CD4-positive, alpha-beta T cell (primary cell): ENCODE measurements at regions of chr10 and their contacts with region 1.

Region 1: GRCh38 chr10:124640538-124641231 is 103.5 kb downstream of the FAM53B start:
- DNase-seq: peak in 4 of 14 experiments; percentile 39 to 58 (median 48)
- ATAC-seq: peak; percentile 25
- H3K4me3 ChIP-seq: peak overlapping the region; percentile 15
- H3K4me3 Mint-ChIP-seq: peak overlapping the region; percentile 46
- H3K27ac ChIP-seq: peak overlapping the region; percentile 43 to 49
- H3K27ac Mint-ChIP-seq: peak overlapping the region; percentile 95
- H3K4me1 ChIP-seq: peaks cover 100% of the 10 kb centered on the region
- H3K4me1 Mint-ChIP-seq: peaks cover 86% of the 10 kb centered on the region
- H3K27me3 ChIP-seq: no peaks in the 10 kb centered on the region
- H3K27me3 Mint-ChIP-seq: no peaks in the 10 kb centered on the region
- CTCF ChIP-seq: no peak

Region 2: GRCh38 chr10:124323111-124323886 is 317.4 kb before region 1 on chr10:
- CTCF ChIA-PET with region 1: no interaction called
- POLR2A ChIA-PET with region 1: no interaction called
- intact Hi-C with region 1: no loop called
- DNase-seq: peak in 2 of 14 experiments; percentile 28 to 30
- ATAC-seq: no peak
- H3K4me3 ChIP-seq: no peak overlapping the region
- H3K4me3 Mint-ChIP-seq: no peak overlapping the region
- H3K27ac ChIP-seq: no peak overlapping the region
- H3K27ac Mint-ChIP-seq: no peak overlapping the region
- H3K4me1 ChIP-seq: no peaks in the 10 kb centered on the region
- H3K4me1 Mint-ChIP-seq: no peaks in the 10 kb centered on the region
- H3K27me3 ChIP-seq: no peaks in the 10 kb centered on the region
- H3K27me3 Mint-ChIP-seq: peaks cover 10% of the 10 kb centered on the region
- CTCF ChIP-seq: no peak

Region 3: DNA sequence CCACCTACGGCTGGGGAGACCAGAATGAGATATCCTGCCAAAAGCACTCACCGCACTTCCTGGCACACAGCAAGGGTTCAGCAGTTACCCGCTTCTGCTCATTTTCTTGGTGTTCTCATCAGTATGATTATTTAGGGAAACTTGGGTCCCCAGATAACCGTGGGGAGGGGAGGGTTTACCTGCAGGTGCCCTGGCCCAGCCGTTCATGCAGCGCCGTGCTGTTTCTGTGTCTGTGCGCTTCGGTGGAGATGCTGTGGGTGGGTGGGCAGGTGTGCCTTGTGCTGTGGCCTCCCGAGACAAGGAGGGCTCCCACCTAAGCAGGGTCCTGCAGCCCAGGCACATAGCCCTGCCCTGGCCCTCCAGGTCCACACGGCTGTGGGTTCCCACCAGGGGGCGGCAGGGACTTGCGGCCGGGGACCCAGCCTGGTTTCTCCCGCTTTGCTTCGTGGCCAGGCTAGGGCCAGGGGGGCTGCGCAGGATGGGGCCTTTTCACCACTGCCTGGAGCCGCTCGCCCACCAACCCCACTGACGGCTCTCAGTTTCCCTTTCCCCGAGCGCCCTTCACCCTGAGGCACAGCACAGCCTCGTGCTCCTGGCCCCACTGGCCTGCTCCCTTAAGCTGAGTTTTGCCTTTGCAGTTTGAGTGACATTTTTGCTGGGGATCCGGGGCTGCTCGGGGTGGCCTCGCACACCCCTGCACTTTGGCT is 100.6 kb before region 1 on chr10:
- CTCF ChIA-PET with region 1: interaction called, 3 read pairs
- POLR2A ChIA-PET with region 1: no interaction called
- intact Hi-C with region 1: loop called (anchors 5 to 10 kb)
- DNase-seq: peak; percentile 55 to 82 (median 69)
- ATAC-seq: peak; percentile 90
- H3K4me3 ChIP-seq: no peak overlapping the region
- H3K4me3 Mint-ChIP-seq: no peak overlapping the region
- H3K27ac ChIP-seq: no peak overlapping the region
- H3K27ac Mint-ChIP-seq: no peak overlapping the region
- H3K4me1 ChIP-seq: peaks cover 13% of the 10 kb centered on the region
- H3K4me1 Mint-ChIP-seq: peaks cover 9% of the 10 kb centered on the region
- H3K27me3 ChIP-seq: no peaks in the 10 kb centered on the region
- H3K27me3 Mint-ChIP-seq: no peaks in the 10 kb centered on the region
- CTCF ChIP-seq: peak; percentile 70

Region 4: GRCh38 chr10:124671486-124672075 is 30.9 kb after region 1 on chr10:
- CTCF ChIA-PET with region 1: interaction called, 8 read pairs
- POLR2A ChIA-PET with region 1: interaction called, 3 read pairs
- intact Hi-C with region 1: loop called in 1 of 2 experiments (anchors 5 kb)
- DNase-seq: peak in 3 of 14 experiments; percentile 47 to 51 (median 50)
- ATAC-seq: peak; percentile 47
- H3K4me3 ChIP-seq: no peak overlapping the region
- H3K4me3 Mint-ChIP-seq: peak overlapping the region; percentile 70
- H3K27ac ChIP-seq: peak overlapping the region in 1 of 2 donors; percentile 33
- H3K27ac Mint-ChIP-seq: peak overlapping the region; percentile 73
- H3K4me1 ChIP-seq: peaks cover 98% of the 10 kb centered on the region
- H3K4me1 Mint-ChIP-seq: peaks cover 92% of the 10 kb centered on the region
- H3K27me3 ChIP-seq: no peaks in the 10 kb centered on the region
- H3K27me3 Mint-ChIP-seq: no peaks in the 10 kb centered on the region
- CTCF ChIP-seq: no peak

Region 5: GRCh38 chr10:124677749-124678556 is 37.3 kb after region 1 on chr10:
- CTCF ChIA-PET with region 1: interaction called, 6 read pairs
- POLR2A ChIA-PET with region 1: interaction called, 11 read pairs
- intact Hi-C with region 1: loop called in 1 of 2 experiments (anchors 5 kb)
- DNase-seq: peak in 1 of 14 experiments; percentile 28
- ATAC-seq: peak; percentile 42
- H3K4me3 ChIP-seq: no peak overlapping the region
- H3K4me3 Mint-ChIP-seq: peak overlapping the region; percentile 63
- H3K27ac ChIP-seq: peak overlapping the region; percentile 29 to 39
- H3K27ac Mint-ChIP-seq: peak overlapping the region; percentile 87
- H3K4me1 ChIP-seq: peaks cover 94% of the 10 kb centered on the region
- H3K4me1 Mint-ChIP-seq: peaks cover 90% of the 10 kb centered on the region
- H3K27me3 ChIP-seq: no peaks in the 10 kb centered on the region
- H3K27me3 Mint-ChIP-seq: no peaks in the 10 kb centered on the region
- CTCF ChIP-seq: no peak

Region 6: GRCh38 chr10:124697830-124698544 is 57.3 kb after region 1 on chr10:
- CTCF ChIA-PET with region 1: interaction called, 4 read pairs
- POLR2A ChIA-PET with region 1: interaction called, 11 read pairs
- intact Hi-C with region 1: no loop called
- DNase-seq: peak in 11 of 14 experiments; percentile 32 to 81 (median 43)
- ATAC-seq: peak; percentile 59
- H3K4me3 ChIP-seq: no peak overlapping the region
- H3K4me3 Mint-ChIP-seq: peak overlapping the region; percentile 42
- H3K27ac ChIP-seq: peak overlapping the region; percentile 74 to 85
- H3K27ac Mint-ChIP-seq: peak overlapping the region; percentile 91
- H3K4me1 ChIP-seq: peaks cover 97% of the 10 kb centered on the region
- H3K4me1 Mint-ChIP-seq: peaks cover 95% of the 10 kb centered on the region
- H3K27me3 ChIP-seq: no peaks in the 10 kb centered on the region
- H3K27me3 Mint-ChIP-seq: no peaks in the 10 kb centered on the region
- CTCF ChIP-seq: no peak

Region 7: DNA sequence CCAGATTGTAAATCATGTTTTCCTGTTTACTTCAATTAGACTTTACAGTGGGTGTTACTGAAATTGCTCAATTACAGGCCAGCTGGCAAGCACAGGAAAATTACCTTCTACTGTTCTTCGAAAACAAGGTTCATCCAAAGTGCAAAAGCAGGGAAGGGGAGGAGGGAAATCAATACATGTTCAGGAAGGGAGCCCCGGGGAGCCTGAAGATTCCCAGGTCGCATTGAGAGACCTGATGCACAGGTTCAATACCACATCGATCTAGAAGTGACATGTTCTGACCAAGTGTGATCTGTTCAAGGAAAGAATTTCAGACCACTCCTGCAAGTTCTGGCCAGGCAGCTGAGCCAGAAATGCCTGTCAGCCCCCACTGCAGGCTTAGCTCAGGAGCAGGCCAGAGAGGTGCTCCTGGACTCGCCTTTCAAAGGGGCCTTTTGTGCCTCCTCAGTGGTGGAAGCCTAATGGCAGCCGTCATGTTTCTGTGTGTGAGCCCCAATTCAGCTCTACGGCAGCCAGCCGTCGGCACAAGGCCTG is 67.6 kb after region 1 on chr10:
- CTCF ChIA-PET with region 1: no interaction called
- POLR2A ChIA-PET with region 1: no interaction called
- intact Hi-C with region 1: no loop called
- DNase-seq: no peak
- ATAC-seq: no peak
- H3K4me3 ChIP-seq: no peak overlapping the region
- H3K4me3 Mint-ChIP-seq: peak overlapping the region; percentile 1
- H3K27ac ChIP-seq: peak overlapping the region in 1 of 2 donors; percentile 38
- H3K27ac Mint-ChIP-seq: peak overlapping the region; percentile 91
- H3K4me1 ChIP-seq: peaks cover 99% of the 10 kb centered on the region
- H3K4me1 Mint-ChIP-seq: peaks cover 90% of the 10 kb centered on the region
- H3K27me3 ChIP-seq: no peaks in the 10 kb centered on the region
- H3K27me3 Mint-ChIP-seq: no peaks in the 10 kb centered on the region
- CTCF ChIP-seq: no peak